WTC11 (cell line): ENCODE measurements at regions of chr3 and their contacts with region 1.

Region 1: GRCh38 chr3:39447637-39448483 is 19.6 kb upstream of the MOBP start:
- DNase-seq: peak; percentile 74
- ATAC-seq: peak; percentile 86
- H3K4me3 Mint-ChIP-seq: no peak overlapping the region
- H3K27ac Mint-ChIP-seq: no peak overlapping the region
- H3K4me1 Mint-ChIP-seq: peaks cover 12% of the 10 kb centered on the region
- H3K27me3 Mint-ChIP-seq: no peaks in the 10 kb centered on the region
- CTCF ChIP-seq: peak; percentile 72

Region 2: DNA sequence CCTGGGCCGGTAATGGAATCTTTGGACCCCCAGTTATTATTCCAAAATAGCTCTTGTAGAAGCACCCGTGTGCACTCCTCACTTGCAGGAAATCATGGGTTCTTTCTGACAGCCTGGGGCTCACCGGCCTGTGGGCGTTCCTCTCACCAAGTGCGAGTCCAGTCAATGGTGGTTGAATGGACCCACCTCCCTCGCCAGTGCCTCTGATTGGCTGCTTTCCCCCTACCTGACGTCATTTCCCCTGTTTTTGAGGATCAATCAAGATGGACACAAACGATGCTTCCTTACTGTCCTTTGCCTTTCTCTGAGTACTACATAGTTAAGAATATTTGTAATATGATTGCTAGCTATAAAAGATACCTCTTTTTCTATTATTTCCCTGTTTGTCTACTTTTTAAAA is 37.7 kb after region 1 on chr3:
- CTCF ChIA-PET with region 1: interaction called, 11 read pairs
- POLR2A ChIA-PET with region 1: no interaction called
- DNase-seq: no peak
- ATAC-seq: peak; percentile 62
- H3K4me3 Mint-ChIP-seq: no peak overlapping the region
- H3K27ac Mint-ChIP-seq: no peak overlapping the region
- H3K4me1 Mint-ChIP-seq: no peaks in the 10 kb centered on the region
- H3K27me3 Mint-ChIP-seq: no peaks in the 10 kb centered on the region; the same call in 1 of the 2 replicates
- CTCF ChIP-seq: no peak

Region 3: GRCh38 chr3:39515681-39516441 is 68.0 kb after region 1 on chr3:
- CTCF ChIA-PET with region 1: no interaction called
- POLR2A ChIA-PET with region 1: no interaction called
- DNase-seq: no peak
- ATAC-seq: peak; percentile 68
- H3K4me3 Mint-ChIP-seq: no peak overlapping the region
- H3K27ac Mint-ChIP-seq: no peak overlapping the region
- H3K4me1 Mint-ChIP-seq: peaks cover 15% of the 10 kb centered on the region
- H3K27me3 Mint-ChIP-seq: peaks cover 9% of the 10 kb centered on the region
- CTCF ChIP-seq: no peak